ENCODE measurements at regions of chr20 and their contacts with region 1.

Region 1: DNA sequence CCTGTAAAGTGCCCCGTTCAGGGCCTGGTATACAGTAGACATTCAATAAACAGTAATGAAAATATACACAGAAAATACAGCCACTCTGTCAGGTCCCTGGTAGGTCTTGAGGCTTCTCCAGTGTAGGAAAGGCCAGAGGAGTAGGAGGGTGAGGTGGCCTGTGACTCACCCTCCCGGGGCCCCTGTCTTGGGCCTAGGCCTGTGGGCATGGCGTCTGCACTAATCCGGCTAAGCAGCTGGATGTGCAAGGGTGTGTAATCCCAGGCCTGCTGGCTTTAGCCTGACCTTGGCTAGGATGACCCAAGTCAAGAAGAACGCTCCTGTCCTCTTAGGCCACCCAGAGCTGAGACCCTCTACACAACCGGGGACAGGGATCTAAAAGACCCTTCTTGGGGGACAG is 84.9 kb downstream of the KCNB1 start:
- DNase-seq: no peak
- H3K4me3 ChIP-seq: no peak overlapping the region
- H3K27ac ChIP-seq: peak overlapping the region; percentile 93 to 94
- H3K4me1 ChIP-seq: peaks cover 12 to 18% of the 10 kb centered on the region in 2 donors
- H3K27me3 ChIP-seq: no peaks in the 10 kb centered on the region
- CTCF ChIP-seq: no peak
- POLR2A ChIP-seq: no peak

Region 2: GRCh38 chr20:49344975-49345374 is 52.5 kb before region 1 on chr20:
- intact Hi-C with region 1: loop called (anchors 10 kb)
- DNase-seq: peak; percentile 76 to 89
- H3K4me3 ChIP-seq: no peak overlapping the region
- H3K27ac ChIP-seq: peak overlapping the region; percentile 84 to 91
- H3K4me1 ChIP-seq: peaks cover 3 to 6% of the 10 kb centered on the region in 2 donors
- H3K27me3 ChIP-seq: no peaks in the 10 kb centered on the region
- CTCF ChIP-seq: no peak
- POLR2A ChIP-seq: no peak

Region 3: DNA sequence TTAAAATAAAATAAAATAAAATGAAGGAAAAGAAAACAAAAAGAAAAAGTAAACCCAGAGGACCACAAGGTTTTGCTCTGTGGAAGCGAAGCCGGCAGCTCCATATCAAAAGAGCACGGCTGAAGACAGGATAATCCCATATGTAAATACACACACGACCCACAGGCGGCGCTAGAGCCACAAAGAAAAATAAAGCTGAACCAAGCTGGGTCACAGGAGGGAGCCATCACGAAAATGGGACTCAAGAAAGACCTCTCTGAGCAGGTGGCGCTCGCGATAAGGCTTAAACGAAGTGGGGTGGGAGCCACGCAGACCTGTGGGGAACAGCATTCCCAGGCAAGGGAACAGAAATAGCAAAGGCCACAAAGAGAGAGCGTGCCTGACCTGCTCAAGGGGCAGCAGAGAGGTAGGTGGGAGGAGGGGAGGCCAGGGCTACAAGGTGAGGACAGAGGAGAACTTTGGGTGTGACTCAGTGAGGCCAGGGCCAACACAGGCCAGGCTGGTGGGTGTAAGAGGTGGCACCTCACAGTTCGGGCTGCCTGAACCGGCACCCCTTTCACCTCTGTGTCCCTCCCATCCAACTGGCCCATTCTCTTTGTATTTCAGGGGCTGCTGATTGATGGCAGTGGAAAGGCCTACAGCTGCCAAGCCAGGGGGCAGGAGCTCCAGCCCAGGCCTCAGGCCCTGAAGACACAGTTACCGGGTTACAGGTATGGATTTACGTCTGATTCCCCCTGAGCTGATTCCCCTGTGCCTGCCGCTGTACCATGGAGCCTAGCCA is 144.4 kb after region 1 on chr20:
- intact Hi-C with region 1: no loop called
- DNase-seq: peak; percentile 78 to 83
- H3K4me3 ChIP-seq: no peak overlapping the region
- H3K27ac ChIP-seq: peak overlapping the region; percentile 43 to 74
- H3K4me1 ChIP-seq: no peaks in the 10 kb centered on the region
- H3K27me3 ChIP-seq: no peaks in the 10 kb centered on the region
- CTCF ChIP-seq: peak; percentile 87 to 97 (median 92)
- POLR2A ChIP-seq: no peak

Measured in uterus (tissue), 4 donors.